ENCODE measurements at regions of chr12 and their contacts with region 1.

Region 1: DNA sequence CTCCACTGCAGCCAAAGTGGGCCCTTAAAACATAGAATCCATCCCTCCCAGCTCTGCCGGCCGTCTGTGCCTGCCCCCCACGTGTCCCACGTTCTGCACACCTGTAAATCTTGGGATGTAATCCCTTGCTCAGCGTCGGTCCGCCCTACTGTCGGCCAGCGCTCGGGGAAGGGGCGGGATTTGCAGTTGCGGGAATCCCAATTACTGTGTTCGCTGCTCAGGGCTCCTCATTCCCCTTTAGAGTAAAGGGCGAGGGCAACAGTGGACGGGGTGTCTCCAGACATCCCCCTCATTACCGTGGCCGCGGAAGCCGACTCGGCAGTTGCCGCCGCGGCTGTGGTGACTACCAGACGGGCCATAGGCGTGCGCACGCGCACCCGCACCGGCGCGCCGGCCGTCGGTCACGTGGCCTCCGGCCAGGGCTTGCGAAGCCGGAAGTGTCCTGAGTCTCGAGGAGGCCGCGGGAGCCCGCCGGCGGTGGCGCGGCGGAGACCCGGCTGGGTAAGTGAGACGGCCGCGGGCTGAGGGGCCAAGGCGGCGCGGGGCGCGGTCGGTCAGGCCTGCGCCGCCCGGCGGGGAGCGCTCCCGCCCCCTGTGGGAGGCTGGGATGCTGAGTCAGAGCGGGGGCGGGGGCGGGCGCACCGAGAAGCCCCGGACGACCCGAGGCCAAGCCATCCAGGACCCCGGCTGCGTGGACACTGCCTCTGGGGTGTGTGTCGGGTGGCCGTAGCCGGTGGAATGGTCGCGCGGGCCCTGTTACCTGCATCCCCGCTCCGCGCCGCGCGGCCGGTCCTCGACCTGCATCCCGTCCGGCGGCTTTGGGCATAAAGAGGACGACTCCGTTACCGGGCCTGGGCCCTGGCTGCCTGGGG is at the start of gene TBK1:
- DNase-seq: peak; percentile 83
- H3K4me3 ChIP-seq: peak within 1 kb of the TSS; percentile 91 to 100 (median 98)
- H3K27ac ChIP-seq: peak within 1 kb of the TSS; percentile 98
- H3K4me1 ChIP-seq: peaks cover 17% of the 10 kb centered on the region
- H3K27me3 ChIP-seq: no peaks in the 10 kb centered on the region
- CTCF ChIP-seq: no peak
- total RNA-seq, gene TBK1: 19.9 to 20.2 TPM

Region 2: GRCh38 chr12:64404470-64405256 is 47.3 kb before region 1 on chr12:
- CTCF ChIA-PET with region 1: no interaction called
- dilution Hi-C with region 1: no loop called
- in situ Hi-C with region 1: no loop called
- intact Hi-C with region 1: loop called (anchors 5 kb)
- DNase-seq: peak; percentile 54
- H3K4me3 ChIP-seq: peak overlapping the region; percentile 95 to 98 (median 97)
- H3K27ac ChIP-seq: peak overlapping the region; percentile 84
- H3K4me1 ChIP-seq: peaks cover 12% of the 10 kb centered on the region
- H3K27me3 ChIP-seq: no peaks in the 10 kb centered on the region
- CTCF ChIP-seq: no peak